Activated B cell treated with CpG ODN at 0.5 μM for 24 hours (primary cell): ENCODE measurements at regions of chr17 and their contacts with region 1.

Region 1: DNA sequence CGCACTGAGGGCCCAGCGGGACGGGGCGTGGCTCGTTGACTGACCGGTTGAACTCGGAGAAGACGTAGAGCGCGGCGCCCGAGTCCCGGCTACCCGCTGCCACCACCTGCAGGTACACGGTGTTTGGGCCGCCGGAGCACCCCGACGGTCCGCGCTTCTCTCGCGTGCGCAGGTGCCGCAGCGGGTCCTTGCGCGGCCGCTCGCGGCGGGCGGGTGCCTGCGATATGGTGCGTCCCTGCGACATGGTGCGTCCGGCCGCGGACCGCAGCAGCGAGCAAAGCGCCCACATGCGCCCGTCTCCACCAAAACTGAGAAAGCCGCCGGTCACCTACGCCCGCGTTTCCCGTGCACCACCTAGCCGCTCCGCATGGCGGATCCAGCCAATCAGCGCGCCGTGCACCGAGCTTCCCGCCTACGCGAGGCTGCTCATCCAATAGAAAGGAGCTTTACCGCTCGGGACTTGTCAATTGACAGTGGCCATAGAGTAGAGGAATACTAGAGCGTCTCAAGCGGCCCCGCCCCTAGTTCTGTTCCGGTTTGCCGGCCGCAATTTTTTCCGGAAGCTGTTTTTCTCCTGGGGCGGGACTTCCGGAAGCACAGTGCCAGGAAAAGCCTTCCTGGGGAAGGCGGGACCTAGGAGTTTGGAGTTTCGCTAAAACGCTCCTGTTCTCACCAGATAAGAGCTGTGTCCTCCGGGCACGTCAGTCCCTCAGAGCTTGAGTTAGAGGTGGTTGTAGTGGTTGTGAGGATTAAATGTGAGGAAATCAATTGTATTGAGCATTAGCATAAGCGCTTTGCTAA is at the start of gene ELAC2:
- DNase-seq: peak; percentile 88
- ATAC-seq: peak; percentile 98
- H3K4me3 Mint-ChIP-seq: peak within 1 kb of the TSS; percentile 98
- H3K27ac Mint-ChIP-seq: peak within 1 kb of the TSS; percentile 96
- H3K4me1 Mint-ChIP-seq: peaks cover 17% of the 10 kb centered on the region
- H3K27me3 Mint-ChIP-seq: peaks cover 2% of the 10 kb centered on the region
- CTCF ChIP-seq: no peak
- total RNA-seq, gene ELAC2: 90.3 and 90.6 TPM in 2 replicates

Region 2: GRCh38 chr17:12020642-12021622 is 996.9 kb before region 1 on chr17 and contains the start of gene MAP2K4:
- CTCF ChIA-PET with region 1: no interaction called
- POLR2A ChIA-PET with region 1: interaction called, 7 read pairs
- intact Hi-C with region 1: loop called (anchors 2 kb)
- DNase-seq: peak; percentile 100
- ATAC-seq: peak; percentile 97
- H3K4me3 Mint-ChIP-seq: peak within 1 kb of the TSS; percentile 79
- H3K27ac Mint-ChIP-seq: peak within 1 kb of the TSS; percentile 73
- H3K4me1 Mint-ChIP-seq: peaks cover 35% of the 10 kb centered on the region
- H3K27me3 Mint-ChIP-seq: peaks cover 2% of the 10 kb centered on the region
- CTCF ChIP-seq: no peak
- total RNA-seq, gene MAP2K4: 32.5 and 32.9 TPM in 2 replicates

Region 3: DNA sequence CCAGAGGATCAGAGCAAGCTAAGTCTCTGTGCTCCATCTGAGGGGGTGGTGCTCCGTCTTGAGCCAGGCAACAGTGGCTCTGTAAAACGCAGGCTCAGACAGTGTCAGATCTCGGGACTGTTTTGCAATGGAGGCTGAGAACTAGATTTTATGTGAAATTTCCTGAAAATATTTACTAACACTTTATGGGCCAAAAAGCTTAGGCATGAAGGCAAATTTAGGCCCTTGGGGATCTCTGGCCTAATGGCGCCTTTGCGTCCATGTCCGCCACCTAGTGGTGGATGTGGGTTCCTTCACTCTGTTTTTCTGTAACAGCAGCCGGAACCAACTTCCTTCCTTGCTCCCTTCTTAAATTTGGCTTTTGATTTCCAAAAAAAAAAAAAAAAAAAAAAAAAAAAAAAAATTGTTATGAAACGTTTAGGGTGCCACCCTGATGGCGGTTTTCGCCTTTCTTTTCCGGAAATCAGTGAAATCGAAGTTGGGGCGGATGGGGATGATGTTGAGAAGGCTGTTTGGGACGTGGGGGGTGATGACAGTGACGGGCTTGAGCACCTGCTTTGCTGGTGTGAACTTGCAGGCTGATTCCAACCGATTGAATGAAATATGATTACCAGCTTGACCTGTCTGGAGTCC is 14.0 kb after region 1 on chr17:
- CTCF ChIA-PET with region 1: interaction called, 107 read pairs
- POLR2A ChIA-PET with region 1: interaction called, 8 read pairs
- intact Hi-C with region 1: loop called (anchors 1 kb)
- DNase-seq: no peak
- ATAC-seq: peak; percentile 84
- H3K4me3 Mint-ChIP-seq: no peak overlapping the region
- H3K27ac Mint-ChIP-seq: no peak overlapping the region
- H3K4me1 Mint-ChIP-seq: peaks cover 3% of the 10 kb centered on the region
- H3K27me3 Mint-ChIP-seq: peaks cover 4% of the 10 kb centered on the region
- CTCF ChIP-seq: peak; percentile 54